Dendritic cell treated with granulocyte-macrophage colony-stimulating factor and Interleukin-4, amounts not matched to agents 40 ng/mL and 50 ng/mL, for 4 days (primary cell): ENCODE measurements at regions of chr21 and their contacts with region 1.

Region 1: GRCh38 chr21:26842976-26843932 is 2.0 kb downstream of the ADAMTS1 start:
- H3K4me3 Mint-ChIP-seq: peak overlapping the region; percentile 52
- H3K27ac Mint-ChIP-seq: no peak overlapping the region
- H3K4me1 Mint-ChIP-seq: peaks cover 44% of the 10 kb centered on the region
- H3K27me3 Mint-ChIP-seq: peaks cover 60% of the 10 kb centered on the region

Region 2: DNA sequence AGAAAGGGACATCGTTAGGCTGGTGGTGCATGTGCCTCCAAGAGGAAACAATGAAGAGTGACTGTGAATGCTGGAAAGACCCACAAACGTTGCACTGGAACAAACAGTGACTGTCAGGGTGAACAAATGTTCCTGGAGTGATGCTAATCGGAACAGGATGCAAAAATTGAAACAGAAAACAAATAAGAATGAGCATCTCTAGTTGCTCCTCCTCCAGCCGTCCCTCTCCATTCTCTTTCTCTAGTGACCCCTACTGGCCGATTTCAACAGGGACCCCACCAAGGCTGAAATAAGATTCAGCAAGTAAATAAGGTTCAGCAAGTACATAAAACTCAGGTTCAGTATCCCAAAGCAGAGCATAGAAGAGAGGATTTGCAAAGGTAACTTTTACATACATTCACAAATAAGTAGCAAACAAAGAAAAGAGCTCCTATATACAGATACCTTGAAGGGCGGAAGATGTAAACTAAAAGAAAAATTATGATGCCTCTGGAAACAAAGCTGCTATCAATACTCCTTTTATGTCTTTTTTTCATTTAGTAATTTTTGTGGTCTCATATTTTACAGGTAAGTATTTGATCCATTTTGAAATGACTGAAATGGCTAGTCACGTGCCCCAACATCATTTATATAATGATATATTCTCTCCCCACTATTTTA is 959.7 kb after region 1 on chr21:
- intact Hi-C with region 1: loop called (anchors 10 kb)
- H3K4me3 Mint-ChIP-seq: no peak overlapping the region
- H3K27ac Mint-ChIP-seq: no peak overlapping the region
- H3K4me1 Mint-ChIP-seq: no peaks in the 10 kb centered on the region
- H3K27me3 Mint-ChIP-seq: no peaks in the 10 kb centered on the region